ENCODE measurements at regions of chr6 and their contacts with region 1.

Region 1: GRCh38 chr6:144149891-144150709 is at the start of gene STX11:
- DNase-seq: peak in 1 of 2 experiments; percentile 64
- H3K4me3 ChIP-seq: peak within 1 kb of the TSS; percentile 76
- H3K27ac ChIP-seq: peak within 1 kb of the TSS; percentile 38; the same call in 1 of the 2 replicates
- H3K4me1 ChIP-seq: peaks cover 11% of the 10 kb centered on the region; the same call in 1 of the 2 replicates
- H3K27me3 ChIP-seq: no peaks in the 10 kb centered on the region
- CTCF ChIP-seq: no peak
- total RNA-seq, gene STX11: 0.17 and 0.40 TPM in 2 replicates

Region 2: DNA sequence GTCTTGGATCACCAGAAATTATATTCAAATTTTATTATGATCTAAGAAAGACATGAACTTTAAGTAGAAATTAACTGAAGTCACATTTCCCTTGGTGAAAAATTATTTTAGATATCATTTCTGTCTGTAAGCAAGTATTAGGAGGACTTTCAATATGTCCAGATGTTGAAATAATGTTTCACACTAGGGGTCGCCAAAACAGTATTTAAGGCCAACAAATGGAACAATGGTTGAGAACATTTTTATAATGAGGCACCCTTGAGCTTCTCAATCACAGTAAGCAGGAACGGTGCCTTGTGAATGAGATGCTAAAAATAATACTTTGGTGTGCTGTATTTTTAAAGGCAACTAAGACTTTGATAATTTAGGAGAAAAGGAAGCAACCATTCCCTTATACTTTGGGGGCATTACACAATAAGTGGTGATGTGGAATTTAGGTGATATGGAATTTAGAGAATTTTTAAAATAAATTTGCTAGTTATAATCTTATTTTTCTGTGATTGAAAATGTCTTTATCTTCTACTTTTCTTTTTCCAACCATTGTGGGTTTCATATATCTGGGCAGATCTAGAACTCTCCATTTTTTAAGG is 45.1 kb before region 1 on chr6:
- CTCF ChIA-PET with region 1: no interaction called
- POLR2A ChIA-PET with region 1: no interaction called
- intact Hi-C with region 1: loop called (anchors 2 kb)
- DNase-seq: peak; percentile 19 to 50
- H3K4me3 ChIP-seq: no peak overlapping the region
- H3K27ac ChIP-seq: no peak overlapping the region
- H3K4me1 ChIP-seq: no peaks in the 10 kb centered on the region
- H3K27me3 ChIP-seq: no peaks in the 10 kb centered on the region
- CTCF ChIP-seq: peak; percentile 84

Region 3: GRCh38 chr6:144197919-144198318 is 47.8 kb after region 1 on chr6:
- CTCF ChIA-PET with region 1: no interaction called
- POLR2A ChIA-PET with region 1: no interaction called
- intact Hi-C with region 1: no loop called
- DNase-seq: no peak
- H3K4me3 ChIP-seq: no peak overlapping the region
- H3K27ac ChIP-seq: no peak overlapping the region
- H3K4me1 ChIP-seq: peaks cover 13% of the 10 kb centered on the region; the same call in 1 of the 2 replicates
- H3K27me3 ChIP-seq: no peaks in the 10 kb centered on the region
- CTCF ChIP-seq: no peak

Region 4: GRCh38 chr6:144423167-144423566 is 273.1 kb after region 1 on chr6:
- CTCF ChIA-PET with region 1: no interaction called
- POLR2A ChIA-PET with region 1: no interaction called
- intact Hi-C with region 1: no loop called
- DNase-seq: no peak
- H3K4me3 ChIP-seq: no peak overlapping the region
- H3K27ac ChIP-seq: no peak overlapping the region
- H3K4me1 ChIP-seq: no peaks in the 10 kb centered on the region
- H3K27me3 ChIP-seq: no peaks in the 10 kb centered on the region
- CTCF ChIP-seq: no peak